ENCODE measurements at regions of chr20 and their contacts with region 1.

Region 1: GRCh38 chr20:45044084-45044573 is 56.8 kb downstream of the KCNS1 start:
- DNase-seq: peak; percentile 61
- H3K4me3 ChIP-seq: no peak overlapping the region
- H3K27ac ChIP-seq: peak overlapping the region; percentile 17
- H3K4me1 ChIP-seq: peaks cover 23% of the 10 kb centered on the region
- H3K27me3 ChIP-seq: no peaks in the 10 kb centered on the region
- CTCF ChIP-seq: peak; percentile 94 to 95

Region 2: GRCh38 chr20:45011108-45011526 is 33.0 kb before region 1 on chr20:
- CTCF ChIA-PET with region 1: interaction called, 4 read pairs
- dilution Hi-C with region 1: no loop called
- in situ Hi-C with region 1: no loop called
- intact Hi-C with region 1: loop called (anchors 1 kb)
- DNase-seq: peak; percentile 57
- H3K4me3 ChIP-seq: no peak overlapping the region
- H3K27ac ChIP-seq: peak overlapping the region; percentile 55
- H3K4me1 ChIP-seq: peaks cover 39% of the 10 kb centered on the region
- H3K27me3 ChIP-seq: no peaks in the 10 kb centered on the region
- CTCF ChIP-seq: peak; percentile 72 to 81

Region 3: GRCh38 chr20:45095753-45096371 is 51.7 kb after region 1 on chr20:
- CTCF ChIA-PET with region 1: interaction called, 46 read pairs
- dilution Hi-C with region 1: no loop called
- in situ Hi-C with region 1: loop called in 1 of 2 experiments (anchors 5 kb)
- intact Hi-C with region 1: loop called (anchors 1 kb)
- DNase-seq: peak; percentile 44
- H3K4me3 ChIP-seq: no peak overlapping the region
- H3K27ac ChIP-seq: no peak overlapping the region
- H3K4me1 ChIP-seq: peaks cover 10% of the 10 kb centered on the region
- H3K27me3 ChIP-seq: no peaks in the 10 kb centered on the region
- CTCF ChIP-seq: peak; percentile 65 to 84

Region 4: GRCh38 chr20:45229264-45230056 is 185.3 kb after region 1 on chr20:
- CTCF ChIA-PET with region 1: no interaction called
- dilution Hi-C with region 1: no loop called
- in situ Hi-C with region 1: no loop called
- intact Hi-C with region 1: loop called (anchors 1 kb)
- DNase-seq: peak; percentile 47
- H3K4me3 ChIP-seq: no peak overlapping the region
- H3K27ac ChIP-seq: no peak overlapping the region
- H3K4me1 ChIP-seq: no peaks in the 10 kb centered on the region
- H3K27me3 ChIP-seq: peaks cover 3% of the 10 kb centered on the region
- CTCF ChIP-seq: peak; percentile 81 to 87

Region 5: GRCh38 chr20:45311589-45312211 is 267.6 kb after region 1 on chr20:
- CTCF ChIA-PET with region 1: no interaction called
- dilution Hi-C with region 1: no loop called
- in situ Hi-C with region 1: no loop called
- intact Hi-C with region 1: loop called (anchors 5 kb)
- DNase-seq: no peak
- H3K4me3 ChIP-seq: no peak overlapping the region
- H3K27ac ChIP-seq: no peak overlapping the region
- H3K4me1 ChIP-seq: no peaks in the 10 kb centered on the region
- H3K27me3 ChIP-seq: peaks cover 4% of the 10 kb centered on the region
- CTCF ChIP-seq: peak; percentile 72 to 87

Measured in mammary epithelial cell (primary cell).